HEK293 (cell line): ENCODE measurements at regions of chr2 and their contacts with region 1.

Region 1: GRCh38 chr2:217785544-217786045 is 217.2 kb downstream of the TNS1 start:
- H3K4me3 ChIP-seq: no peak overlapping the region
- H3K27ac ChIP-seq: no peak overlapping the region
- H3K4me1 ChIP-seq: no peaks in the 10 kb centered on the region
- CTCF ChIP-seq: peak; percentile 89

Region 2: DNA sequence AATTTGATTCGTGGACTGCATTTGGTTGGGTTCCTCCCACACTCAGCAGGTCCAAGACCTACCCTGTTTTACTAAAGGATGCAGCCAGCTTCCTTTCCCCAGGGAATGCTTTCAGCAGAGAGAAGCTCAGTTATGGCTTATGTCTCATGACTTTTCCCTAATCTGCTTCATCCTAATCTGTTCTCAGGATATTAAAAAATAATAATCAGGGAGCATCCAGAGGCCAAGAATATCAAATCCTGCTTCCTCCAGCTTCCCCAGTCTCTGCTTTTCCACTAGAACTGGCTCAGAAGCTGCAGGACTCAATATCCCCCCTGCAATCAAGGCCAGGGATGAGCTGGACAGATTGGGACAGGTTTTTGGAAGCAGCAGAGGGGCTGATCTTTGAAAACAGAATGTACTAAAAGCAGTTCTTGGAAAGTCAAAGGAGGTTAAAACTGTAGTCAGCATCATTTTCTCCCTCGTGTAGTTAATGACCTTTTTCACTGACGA is 598.9 kb before region 1 on chr2:
- CTCF ChIA-PET with region 1: no interaction called
- POLR2A ChIA-PET with region 1: no interaction called
- H3K4me3 ChIP-seq: no peak overlapping the region
- H3K27ac ChIP-seq: no peak overlapping the region
- H3K4me1 ChIP-seq: no peaks in the 10 kb centered on the region
- CTCF ChIP-seq: no peak

Region 3: DNA sequence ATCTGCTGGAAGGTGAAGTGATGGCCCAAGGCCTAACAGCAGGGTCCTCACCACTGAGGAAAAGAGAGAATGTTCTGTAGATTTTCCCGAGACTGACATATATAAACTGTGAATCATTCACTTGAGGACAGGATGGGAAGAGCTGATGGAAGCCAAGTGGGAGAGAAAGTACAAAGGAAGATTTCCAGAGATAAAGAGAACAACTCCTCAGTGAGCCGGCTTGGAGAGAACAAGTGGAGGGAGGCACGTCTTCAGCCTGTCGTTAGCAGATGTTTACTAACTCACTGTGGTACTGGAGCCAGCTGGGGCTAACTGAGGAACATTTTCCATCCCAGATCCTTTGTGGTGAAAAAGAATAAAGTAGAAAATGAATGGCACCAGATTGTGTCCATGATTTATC is 372.9 kb before region 1 on chr2:
- CTCF ChIA-PET with region 1: no interaction called
- POLR2A ChIA-PET with region 1: no interaction called
- H3K4me3 ChIP-seq: no peak overlapping the region
- H3K27ac ChIP-seq: no peak overlapping the region
- H3K4me1 ChIP-seq: no peaks in the 10 kb centered on the region
- CTCF ChIP-seq: no peak

Region 4: DNA sequence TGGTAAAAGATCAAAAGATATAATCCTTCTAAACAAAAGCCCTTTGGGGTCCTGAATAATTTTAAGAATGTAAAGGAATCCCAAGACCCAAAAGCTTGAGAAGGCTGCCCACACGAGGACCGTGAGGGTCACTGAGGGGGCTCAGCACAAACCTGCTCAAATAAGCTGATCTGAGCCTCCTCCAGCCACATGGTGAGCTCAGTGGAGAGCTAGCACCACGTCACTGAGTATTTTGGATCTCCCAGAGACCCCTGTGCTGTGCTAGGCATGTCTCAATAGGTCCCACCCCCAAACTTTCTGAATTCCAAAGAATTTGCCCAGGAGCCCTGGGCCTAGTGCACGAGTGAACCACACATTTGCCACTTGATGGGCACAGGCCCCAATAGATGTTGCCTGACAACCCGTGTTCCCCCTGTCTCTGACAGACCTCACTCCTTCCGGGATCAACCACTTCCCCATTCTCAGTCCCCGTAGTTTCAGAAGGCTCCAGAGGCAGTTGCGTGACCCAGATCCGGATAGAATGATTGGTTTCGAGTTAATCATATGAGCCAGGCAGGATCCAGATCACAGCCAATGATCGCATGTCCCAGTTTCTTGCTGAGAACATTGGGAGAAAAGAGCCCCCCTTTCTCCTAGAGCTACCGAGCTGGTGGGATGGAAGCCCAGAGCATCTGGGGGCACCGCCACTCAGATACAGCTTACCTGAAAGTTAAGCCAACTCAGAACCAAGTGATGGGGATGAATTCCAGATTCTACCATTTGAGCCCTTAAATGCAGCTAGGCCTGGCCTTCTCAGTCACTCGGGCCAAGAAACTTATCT is 13.4 kb after region 1 on chr2:
- CTCF ChIA-PET with region 1: interaction called, 33 read pairs
- POLR2A ChIA-PET with region 1: no interaction called
- H3K4me3 ChIP-seq: no peak overlapping the region
- H3K27ac ChIP-seq: no peak overlapping the region
- H3K4me1 ChIP-seq: no peaks in the 10 kb centered on the region
- CTCF ChIP-seq: no peak

Region 5: DNA sequence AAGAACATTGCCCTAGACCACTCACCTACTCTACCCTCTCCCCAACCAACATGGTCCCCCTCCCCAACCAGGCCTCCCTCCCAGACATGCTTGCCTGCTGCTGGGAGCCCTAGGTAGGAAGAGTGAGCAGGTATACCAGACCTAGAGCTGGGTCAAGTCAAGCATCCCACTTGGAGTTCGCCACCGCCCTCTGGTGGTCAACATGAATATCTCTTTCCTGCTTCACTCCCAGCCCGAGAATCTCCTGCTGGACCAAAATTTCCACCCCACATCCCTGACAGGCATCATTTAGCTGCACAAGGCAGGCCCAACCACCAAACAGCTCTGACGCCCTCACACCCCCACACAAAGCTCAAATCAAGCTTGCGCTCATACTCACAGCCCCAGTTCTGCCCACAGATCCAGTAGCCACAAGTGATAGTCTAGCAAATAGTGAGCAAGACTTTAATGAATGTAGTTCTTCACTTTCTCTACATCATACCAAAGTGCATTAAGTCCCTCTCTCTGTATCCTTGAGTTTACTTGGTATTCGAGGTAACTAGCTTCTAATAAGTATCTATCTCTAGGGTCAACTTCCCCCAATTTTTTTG is 101.2 kb after region 1 on chr2:
- CTCF ChIA-PET with region 1: interaction called, 387 read pairs
- POLR2A ChIA-PET with region 1: no interaction called
- H3K4me3 ChIP-seq: no peak overlapping the region
- H3K27ac ChIP-seq: no peak overlapping the region
- H3K4me1 ChIP-seq: no peaks in the 10 kb centered on the region
- CTCF ChIP-seq: peak; percentile 76

Region 6: DNA sequence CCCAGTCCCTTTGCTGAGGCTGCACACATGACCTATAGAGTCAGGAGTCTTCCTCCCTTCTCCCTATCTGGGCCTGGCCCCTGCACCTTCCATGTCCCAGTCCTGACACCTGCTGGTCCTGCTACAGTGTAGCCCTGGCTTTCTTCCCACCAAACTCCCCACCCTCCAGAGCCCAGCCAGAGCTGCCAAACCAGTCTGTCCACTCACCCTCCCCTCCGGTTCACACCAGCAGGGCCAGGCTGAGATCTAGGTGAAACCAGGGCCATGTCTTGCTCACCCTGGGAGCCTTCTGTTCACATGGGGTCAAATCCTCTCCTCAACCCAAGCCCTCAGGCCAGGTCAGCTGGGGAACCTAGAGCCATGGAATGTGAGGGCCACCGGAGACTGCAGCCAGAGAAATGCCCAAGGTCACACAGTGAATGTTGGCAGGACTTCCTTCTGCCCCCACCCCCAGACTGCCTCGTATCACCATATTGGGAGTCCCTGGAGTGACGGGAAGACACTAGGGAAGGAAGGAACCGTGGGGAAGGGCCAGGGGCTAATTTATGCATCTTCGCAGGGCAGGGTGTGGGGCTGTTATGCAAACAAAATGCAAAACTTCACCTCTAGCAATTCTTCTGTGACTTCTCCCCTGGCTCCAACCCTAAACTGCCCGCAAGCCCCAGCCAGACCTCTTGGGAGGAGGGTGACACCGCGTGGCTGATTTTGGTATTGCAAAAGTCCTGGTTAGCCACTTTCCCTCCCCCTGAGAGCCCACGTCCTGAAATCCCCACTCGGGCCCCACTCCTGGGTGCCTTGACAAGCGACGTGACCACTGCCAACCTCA is 202.6 kb after region 1 on chr2:
- CTCF ChIA-PET with region 1: interaction called, 107 read pairs
- POLR2A ChIA-PET with region 1: no interaction called
- H3K4me3 ChIP-seq: no peak overlapping the region
- H3K27ac ChIP-seq: no peak overlapping the region
- H3K4me1 ChIP-seq: peaks cover 2% of the 10 kb centered on the region; the same call in 1 of the 2 replicates
- CTCF ChIP-seq: peak; percentile 75

Region 7: DNA sequence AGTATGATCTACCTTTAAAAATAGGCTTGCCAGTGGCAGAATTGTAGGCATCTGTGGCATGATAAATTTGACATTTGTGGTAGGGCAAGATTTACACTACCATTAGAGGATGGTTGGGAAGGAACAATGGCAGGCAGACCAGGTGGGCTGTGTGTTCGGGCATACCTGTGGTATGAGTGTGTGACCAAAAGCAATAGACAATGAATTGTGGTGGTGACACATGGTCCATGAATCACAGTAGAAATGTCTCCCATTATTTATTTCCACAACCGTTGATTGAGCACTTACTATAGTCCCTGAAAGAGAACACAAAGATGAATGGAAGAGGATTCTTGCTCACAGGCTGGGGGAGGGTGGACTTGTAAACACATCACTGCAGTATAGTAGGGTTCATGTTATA is 253.6 kb after region 1 on chr2:
- CTCF ChIA-PET with region 1: interaction called, 25 read pairs
- POLR2A ChIA-PET with region 1: no interaction called
- H3K4me3 ChIP-seq: no peak overlapping the region
- H3K27ac ChIP-seq: no peak overlapping the region
- H3K4me1 ChIP-seq: no peaks in the 10 kb centered on the region
- CTCF ChIP-seq: no peak